ENCODE measurements at regions of chr16 and their contacts with region 1.

Region 1: DNA sequence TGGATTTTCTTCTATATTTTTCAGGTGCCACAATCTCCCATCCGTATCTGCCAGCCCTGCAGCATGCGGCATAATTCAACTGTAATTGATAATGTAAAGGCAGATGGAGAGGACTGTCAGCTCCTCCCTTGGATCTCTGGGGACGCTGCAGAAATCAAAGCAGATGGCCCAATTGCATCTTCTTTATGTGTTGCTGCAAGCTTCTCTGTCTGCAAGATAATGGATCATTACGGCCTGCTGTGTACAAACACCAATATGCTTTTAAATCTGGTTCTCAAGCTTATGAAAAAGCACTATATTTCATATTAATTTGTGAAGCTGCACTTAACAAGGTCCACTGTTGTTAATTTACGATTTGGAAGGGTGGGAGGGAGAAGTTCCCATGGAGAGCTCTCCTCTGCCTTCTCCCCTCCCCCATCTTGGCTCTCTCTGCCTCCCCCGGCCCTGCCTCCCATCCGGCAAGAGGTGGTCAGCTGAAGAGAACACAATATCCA is 607.5 kb downstream of the TOX3 start:
- DNase-seq: no peak
- H3K4me3 ChIP-seq: no peak overlapping the region
- H3K4me3 Mint-ChIP-seq: no peak overlapping the region
- H3K27ac ChIP-seq: no peak overlapping the region
- H3K27ac Mint-ChIP-seq: no peak overlapping the region
- H3K4me1 ChIP-seq: no peaks in the 10 kb centered on the region
- H3K4me1 Mint-ChIP-seq: no peaks in the 10 kb centered on the region
- H3K27me3 ChIP-seq: no peaks in the 10 kb centered on the region
- H3K27me3 Mint-ChIP-seq: no peaks in the 10 kb centered on the region
- CTCF ChIP-seq: no peak

Region 2: DNA sequence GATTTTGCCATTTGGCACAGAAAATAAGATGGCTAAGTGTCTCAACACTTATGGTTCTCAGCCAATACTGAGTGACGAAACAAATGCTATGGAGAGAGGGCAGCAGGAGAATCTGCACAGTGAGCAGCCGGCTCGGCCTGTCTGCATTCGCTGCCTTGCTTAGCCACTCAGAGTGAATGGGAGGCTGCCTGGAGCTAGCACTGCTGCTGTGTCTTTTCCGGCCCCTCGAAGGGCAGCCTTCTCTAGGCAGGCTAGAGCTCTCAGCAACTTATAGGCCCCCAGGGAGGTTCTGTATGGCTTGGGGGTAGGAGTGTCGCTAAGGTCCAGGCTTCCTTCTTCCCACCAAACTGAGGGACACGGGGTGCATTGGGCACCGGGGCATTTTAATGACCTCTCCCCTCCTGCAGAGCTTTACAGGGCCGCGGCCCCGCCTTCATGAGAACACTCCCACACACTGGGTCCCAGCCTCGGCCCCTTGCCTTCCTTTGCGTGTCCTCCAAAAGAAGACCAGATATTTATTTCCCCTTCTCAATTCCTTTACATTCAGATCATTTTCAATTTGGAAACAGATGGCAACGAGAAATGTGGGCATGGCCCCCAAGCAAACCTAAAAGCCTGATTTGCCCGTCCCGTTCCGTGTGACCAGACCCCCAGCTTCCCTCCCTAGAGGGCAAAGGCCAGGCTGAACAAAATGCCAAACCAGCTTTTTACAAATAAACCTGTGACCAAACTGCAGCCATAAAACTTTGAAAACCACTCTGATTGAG is 63.4 kb before region 1 on chr16:
- intact Hi-C with region 1: loop called in 1 of 2 experiments (anchors 10 kb)
- DNase-seq: no peak
- H3K4me3 ChIP-seq: no peak overlapping the region
- H3K4me3 Mint-ChIP-seq: no peak overlapping the region
- H3K27ac ChIP-seq: no peak overlapping the region
- H3K27ac Mint-ChIP-seq: no peak overlapping the region
- H3K4me1 ChIP-seq: no peaks in the 10 kb centered on the region
- H3K4me1 Mint-ChIP-seq: no peaks in the 10 kb centered on the region
- H3K27me3 ChIP-seq: no peaks in the 10 kb centered on the region
- H3K27me3 Mint-ChIP-seq: peaks cover 0 to 1% (median 1%) of the 10 kb centered on the region in 3 donors
- CTCF ChIP-seq: no peak

Region 3: GRCh38 chr16:51907680-51908079 is 31.7 kb before region 1 on chr16:
- intact Hi-C with region 1: loop called in 1 of 2 experiments (anchors 2 kb)
- DNase-seq: no peak
- H3K4me3 ChIP-seq: no peak overlapping the region
- H3K4me3 Mint-ChIP-seq: no peak overlapping the region
- H3K27ac ChIP-seq: no peak overlapping the region
- H3K27ac Mint-ChIP-seq: no peak overlapping the region
- H3K4me1 ChIP-seq: no peaks in the 10 kb centered on the region
- H3K4me1 Mint-ChIP-seq: no peaks in the 10 kb centered on the region
- H3K27me3 ChIP-seq: no peaks in the 10 kb centered on the region
- H3K27me3 Mint-ChIP-seq: peaks cover 0 to 2% (median 0%) of the 10 kb centered on the region in 3 donors
- CTCF ChIP-seq: no peak

Region 4: GRCh38 chr16:52005551-52005950 is 66.1 kb after region 1 on chr16:
- intact Hi-C with region 1: no loop called
- DNase-seq: no peak
- H3K4me3 ChIP-seq: no peak overlapping the region
- H3K4me3 Mint-ChIP-seq: no peak overlapping the region
- H3K27ac ChIP-seq: no peak overlapping the region
- H3K27ac Mint-ChIP-seq: no peak overlapping the region
- H3K4me1 ChIP-seq: no peaks in the 10 kb centered on the region
- H3K4me1 Mint-ChIP-seq: no peaks in the 10 kb centered on the region
- H3K27me3 ChIP-seq: no peaks in the 10 kb centered on the region
- H3K27me3 Mint-ChIP-seq: no peaks in the 10 kb centered on the region
- CTCF ChIP-seq: no peak